ENCODE measurements at regions of chr13 and their contacts with region 1.

Region 1: GRCh38 chr13:25203127-25203740 is 31.1 kb upstream of the AMER2 start:
- DNase-seq: no peak
- ATAC-seq: peak; percentile 67
- H3K4me3 ChIP-seq: no peak overlapping the region
- H3K27ac ChIP-seq: no peak overlapping the region
- H3K4me1 ChIP-seq: no peaks in the 10 kb centered on the region
- H3K27me3 ChIP-seq: no peaks in the 10 kb centered on the region; a peak in 1 of 4 replicates
- CTCF ChIP-seq: no peak
- EP300 ChIP-seq: no peak
- POLR2A ChIP-seq: no peak
- RAD21 ChIP-seq: no peak

Region 2: DNA sequence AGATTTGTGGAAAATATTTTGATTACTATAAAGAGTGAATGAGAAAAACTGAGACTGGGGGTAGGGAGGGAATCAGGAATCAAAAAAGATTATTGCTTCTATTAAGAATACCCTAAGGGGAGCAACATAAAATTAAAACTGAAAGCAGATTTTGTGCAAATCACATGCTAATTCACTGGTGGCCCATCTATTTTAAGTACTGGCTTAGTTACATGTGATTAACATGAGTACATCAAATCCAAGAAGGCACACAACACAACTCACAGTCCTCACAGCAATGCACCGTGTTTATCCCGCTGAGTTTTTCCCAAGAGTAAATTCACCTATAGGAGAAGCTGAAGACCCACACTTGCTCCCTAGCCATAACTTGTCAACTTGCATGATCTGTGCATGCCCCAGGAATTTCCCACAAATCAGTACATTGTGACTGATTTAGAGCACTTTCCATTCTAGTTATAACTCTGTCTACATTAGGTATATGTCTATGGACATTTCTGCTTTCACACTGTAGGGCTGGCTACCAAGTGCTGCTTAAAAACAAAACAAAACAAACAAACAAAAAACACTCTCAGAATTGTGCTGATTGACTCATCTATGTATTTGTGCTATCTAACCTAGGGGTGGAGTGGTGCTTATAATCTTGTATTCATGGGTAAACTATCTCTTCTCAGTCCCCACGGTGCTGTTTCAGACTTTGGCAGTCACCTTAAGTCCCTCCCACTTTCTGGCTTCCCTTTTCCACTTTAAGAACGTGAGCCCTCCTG is 55.4 kb before region 1 on chr13:
- CTCF ChIA-PET with region 1: no interaction called
- POLR2A ChIA-PET with region 1: no interaction called
- RAD21 ChIA-PET with region 1: no interaction called
- SMC1A ChIA-PET with region 1: no interaction called
- in situ Hi-C with region 1: no loop called
- intact Hi-C with region 1: loop called (anchors 10 kb)
- DNase-seq: peak; percentile 31
- ATAC-seq: peak; percentile 86
- H3K4me3 ChIP-seq: no peak overlapping the region
- H3K27ac ChIP-seq: no peak overlapping the region; the same call in 1 of the 2 replicates
- H3K4me1 ChIP-seq: 0 out of 2 replicates have a peak, but pooled peaks cover 2% of the 10 kb centered on the region
- H3K27me3 ChIP-seq: no peaks in the 10 kb centered on the region
- CTCF ChIP-seq: no peak
- EP300 ChIP-seq: peak in 1 of 2 experiments; percentile 58; a peak in 1 of 4 replicates
- POLR2A ChIP-seq: no peak
- RAD21 ChIP-seq: no peak

Region 3: GRCh38 chr13:25406377-25406915 is 203.2 kb after region 1 on chr13:
- CTCF ChIA-PET with region 1: no interaction called
- POLR2A ChIA-PET with region 1: no interaction called
- RAD21 ChIA-PET with region 1: no interaction called
- SMC1A ChIA-PET with region 1: no interaction called
- in situ Hi-C with region 1: no loop called
- intact Hi-C with region 1: no loop called
- DNase-seq: no peak
- ATAC-seq: peak; percentile 31; the same call in 1 of the 3 replicates
- H3K4me3 ChIP-seq: no peak overlapping the region
- H3K27ac ChIP-seq: no peak overlapping the region
- H3K4me1 ChIP-seq: no peaks in the 10 kb centered on the region
- H3K27me3 ChIP-seq: peaks cover 0 to 2% of the 10 kb centered on the region in 2 experiments; a peak in 1 of 4 replicates
- CTCF ChIP-seq: no peak; a peak in 1 of 6 replicates
- EP300 ChIP-seq: no peak
- POLR2A ChIP-seq: no peak
- RAD21 ChIP-seq: no peak

Measured in GM12878 (cell line).